Spleen (tissue), 13 donors: ENCODE measurements at regions of chr13 and their contacts with region 1.

Region 1: GRCh38 chr13:31424117-31424729 is 224.4 kb downstream of the B3GLCT start:
- DNase-seq: peak; percentile 85
- H3K4me3 ChIP-seq: no peak overlapping the region
- H3K27ac ChIP-seq: no peak overlapping the region
- H3K4me1 ChIP-seq: peaks cover 0 to 8% (median 0%) of the 10 kb centered on the region in 6 donors
- H3K27me3 ChIP-seq: no peaks in the 10 kb centered on the region
- CTCF ChIP-seq: peak; percentile 30 to 83 (median 73)
- POLR2A ChIP-seq: no peak

Region 2: DNA sequence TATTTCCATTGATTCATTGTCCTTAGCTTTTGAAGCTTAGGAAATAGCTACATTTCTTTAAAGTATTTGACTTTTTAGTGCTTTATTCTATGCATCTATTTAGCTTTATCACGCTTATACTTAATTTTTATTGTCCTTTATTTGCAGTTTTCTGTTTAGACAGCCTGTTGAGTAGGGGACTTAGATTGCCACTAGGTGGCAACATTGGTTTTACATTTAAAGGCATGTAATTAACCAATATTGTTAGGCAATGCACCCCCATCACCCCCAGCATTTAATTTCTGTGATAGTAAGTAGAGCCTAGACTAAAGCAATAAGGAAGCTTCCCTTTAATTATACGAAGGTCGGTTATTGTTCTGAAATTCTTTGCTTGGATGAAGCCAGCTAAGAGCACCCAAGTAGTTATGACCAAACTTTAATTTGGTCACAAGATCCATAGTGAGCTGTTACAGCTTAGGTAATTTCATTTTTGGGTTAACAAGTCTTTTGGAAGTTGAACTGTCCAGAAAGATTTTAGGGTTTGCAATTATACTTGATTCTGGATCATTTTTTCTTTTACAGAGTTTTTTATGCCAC is 187.9 kb before region 1 on chr13:
- intact Hi-C with region 1: loop called (anchors 5 kb)
- DNase-seq: no peak
- H3K4me3 ChIP-seq: no peak overlapping the region
- H3K27ac ChIP-seq: no peak overlapping the region
- H3K4me1 ChIP-seq: peaks cover 0 to 4% (median 0%) of the 10 kb centered on the region in 6 donors
- H3K27me3 ChIP-seq: no peaks in the 10 kb centered on the region
- CTCF ChIP-seq: peak; percentile 7 to 69 (median 52)
- POLR2A ChIP-seq: no peak

Region 3: DNA sequence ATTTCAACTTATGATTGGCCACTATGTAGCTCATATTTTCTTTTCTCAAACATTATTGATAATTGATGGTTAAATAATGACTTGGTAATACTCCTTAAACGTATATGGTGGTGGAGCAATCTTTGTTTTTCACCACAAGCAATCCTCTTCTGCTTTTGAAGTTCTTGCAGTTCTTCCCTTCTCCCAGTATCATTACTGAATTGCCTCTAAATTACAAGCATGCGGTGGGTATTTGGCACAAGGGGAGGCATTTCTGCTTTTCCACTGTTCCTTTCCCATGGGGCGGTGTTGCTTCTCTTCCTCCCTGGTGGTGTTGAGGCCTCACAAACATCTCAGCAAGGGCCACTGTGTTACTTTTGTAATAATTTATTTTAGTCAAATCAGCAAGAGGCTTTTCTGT is 80.7 kb after region 1 on chr13:
- intact Hi-C with region 1: no loop called
- DNase-seq: no peak
- H3K4me3 ChIP-seq: no peak overlapping the region
- H3K27ac ChIP-seq: no peak overlapping the region
- H3K4me1 ChIP-seq: no peaks in the 10 kb centered on the region
- H3K27me3 ChIP-seq: no peaks in the 10 kb centered on the region
- CTCF ChIP-seq: no peak
- POLR2A ChIP-seq: no peak